ENCODE measurements at regions of chr12 and their contacts with region 1.

Region 1: GRCh38 chr12:89544681-89545184 is 18.9 kb upstream of the POC1B start:
- H3K4me3 ChIP-seq: no peak overlapping the region
- H3K27ac ChIP-seq: no peak overlapping the region
- H3K4me1 ChIP-seq: no peaks in the 10 kb centered on the region
- CTCF ChIP-seq: no peak

Region 2: DNA sequence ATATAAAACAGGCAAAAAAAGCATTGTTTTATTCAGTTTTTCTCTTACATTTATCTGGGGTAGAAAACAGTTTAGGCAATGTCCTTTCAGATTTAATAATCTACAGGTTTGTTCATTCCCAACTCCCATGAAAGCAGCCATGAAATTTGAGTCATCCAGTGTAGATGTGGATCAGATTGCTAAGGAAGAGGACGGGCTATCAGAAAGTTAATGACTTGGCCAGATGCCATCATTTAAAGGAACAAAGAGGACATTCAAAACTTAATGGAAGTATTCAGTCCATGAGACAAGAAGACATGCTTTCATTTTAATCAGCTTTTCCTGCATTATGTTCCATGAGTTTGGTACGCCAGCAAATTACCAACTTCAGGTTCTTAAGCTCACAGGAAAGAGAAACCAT is 12.2 kb after region 1 on chr12:
- CTCF ChIA-PET with region 1: interaction called, 10 read pairs
- POLR2A ChIA-PET with region 1: no interaction called
- H3K4me3 ChIP-seq: no peak overlapping the region
- H3K27ac ChIP-seq: no peak overlapping the region
- H3K4me1 ChIP-seq: peaks cover 2% of the 10 kb centered on the region; the same call in 1 of the 2 replicates
- CTCF ChIP-seq: no peak